Endothelial cell of umbilical vein (primary cell): ENCODE measurements at regions of chr2 and their contacts with region 1.

Region 1: GRCh38 chr2:143217512-143218115 is 88.4 kb downstream of the ARHGAP15 start:
- DNase-seq: no peak
- H3K4me3 ChIP-seq: no peak overlapping the region
- H3K27ac ChIP-seq: no peak overlapping the region
- H3K4me1 ChIP-seq: no peaks in the 10 kb centered on the region
- H3K27me3 ChIP-seq: no peaks in the 10 kb centered on the region
- CTCF ChIP-seq: no peak
- POLR2A ChIP-seq: no peak

Region 2: DNA sequence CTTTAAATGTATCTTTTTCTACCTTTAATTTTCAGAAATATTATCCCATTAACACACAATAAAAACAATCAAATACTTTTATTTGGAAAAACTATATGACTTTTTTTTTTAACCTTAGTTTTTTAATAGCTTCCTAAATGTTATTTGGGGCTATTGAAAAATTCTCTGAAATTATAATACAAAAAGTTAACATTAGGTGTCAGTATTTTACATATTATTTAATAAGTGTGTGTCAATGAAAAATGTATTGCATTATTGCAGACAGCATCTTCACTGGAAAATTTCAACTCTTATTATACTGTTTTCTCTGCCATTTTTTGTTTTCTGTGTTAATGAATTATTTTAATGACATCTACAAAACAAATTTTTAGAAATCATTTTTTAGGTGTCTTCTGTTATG is 139.5 kb before region 1 on chr2:
- CTCF ChIA-PET with region 1: interaction called, 25 read pairs
- POLR2A ChIA-PET with region 1: no interaction called
- dilution Hi-C with region 1: no loop called
- intact Hi-C with region 1: no loop called
- DNase-seq: peak; percentile 2
- H3K4me3 ChIP-seq: no peak overlapping the region
- H3K27ac ChIP-seq: no peak overlapping the region
- H3K4me1 ChIP-seq: no peaks in the 10 kb centered on the region
- H3K27me3 ChIP-seq: no peaks in the 10 kb centered on the region
- CTCF ChIP-seq: no peak
- POLR2A ChIP-seq: no peak

Region 3: DNA sequence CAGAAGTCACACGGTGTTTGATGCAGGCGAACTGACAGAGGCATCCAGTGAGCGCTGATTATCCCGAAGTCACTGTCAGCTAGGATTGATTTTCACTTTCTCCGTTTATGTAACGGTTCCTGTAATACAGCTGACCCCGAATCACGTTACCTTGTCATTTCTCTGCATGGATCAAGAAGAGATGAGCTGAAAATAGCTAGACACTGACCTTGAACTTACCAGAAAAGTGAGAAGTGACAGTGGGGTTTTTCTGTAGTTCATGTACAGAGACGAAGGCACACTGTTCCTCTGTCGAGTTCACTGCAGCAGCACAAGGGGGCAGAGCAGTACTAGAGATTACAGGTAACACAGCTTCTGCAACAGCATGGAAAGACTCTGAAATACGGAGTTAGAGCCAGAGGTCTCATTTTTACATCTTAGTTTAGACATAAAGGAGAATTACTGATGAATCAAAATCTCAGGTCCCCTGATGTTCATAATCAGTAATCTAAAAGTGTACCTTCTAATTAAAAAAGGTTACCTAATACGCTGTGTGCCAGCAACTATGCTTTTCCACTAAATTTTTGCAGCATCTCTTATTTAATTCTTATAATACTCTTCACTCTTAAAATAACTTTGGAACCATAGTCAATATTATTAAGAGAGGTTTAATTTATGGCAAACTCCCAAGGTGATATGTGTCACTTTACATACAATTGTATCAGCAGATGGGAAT is 55.3 kb before region 1 on chr2:
- CTCF ChIA-PET with region 1: interaction called, 11 read pairs
- POLR2A ChIA-PET with region 1: no interaction called
- dilution Hi-C with region 1: no loop called
- intact Hi-C with region 1: loop called (anchors 2 kb)
- DNase-seq: peak; percentile 17
- H3K4me3 ChIP-seq: no peak overlapping the region
- H3K27ac ChIP-seq: no peak overlapping the region
- H3K4me1 ChIP-seq: no peaks in the 10 kb centered on the region
- H3K27me3 ChIP-seq: peaks cover 6% of the 10 kb centered on the region in 2 experiments
- CTCF ChIP-seq: peak; percentile 19 to 44
- POLR2A ChIP-seq: no peak

Region 4: GRCh38 chr2:143205106-143205764 is 12.4 kb before region 1 on chr2:
- CTCF ChIA-PET with region 1: interaction called, 20 read pairs
- POLR2A ChIA-PET with region 1: no interaction called
- dilution Hi-C with region 1: no loop called
- intact Hi-C with region 1: no loop called
- DNase-seq: peak; percentile 4
- H3K4me3 ChIP-seq: no peak overlapping the region
- H3K27ac ChIP-seq: no peak overlapping the region
- H3K4me1 ChIP-seq: no peaks in the 10 kb centered on the region
- H3K27me3 ChIP-seq: peaks cover 0 to 2% of the 10 kb centered on the region in 2 experiments
- CTCF ChIP-seq: peak in 1 of 2 donors; percentile 4
- POLR2A ChIP-seq: no peak